Caco-2 (cell line): ENCODE measurements at regions of chr5 and their contacts with region 1.

Region 1: DNA sequence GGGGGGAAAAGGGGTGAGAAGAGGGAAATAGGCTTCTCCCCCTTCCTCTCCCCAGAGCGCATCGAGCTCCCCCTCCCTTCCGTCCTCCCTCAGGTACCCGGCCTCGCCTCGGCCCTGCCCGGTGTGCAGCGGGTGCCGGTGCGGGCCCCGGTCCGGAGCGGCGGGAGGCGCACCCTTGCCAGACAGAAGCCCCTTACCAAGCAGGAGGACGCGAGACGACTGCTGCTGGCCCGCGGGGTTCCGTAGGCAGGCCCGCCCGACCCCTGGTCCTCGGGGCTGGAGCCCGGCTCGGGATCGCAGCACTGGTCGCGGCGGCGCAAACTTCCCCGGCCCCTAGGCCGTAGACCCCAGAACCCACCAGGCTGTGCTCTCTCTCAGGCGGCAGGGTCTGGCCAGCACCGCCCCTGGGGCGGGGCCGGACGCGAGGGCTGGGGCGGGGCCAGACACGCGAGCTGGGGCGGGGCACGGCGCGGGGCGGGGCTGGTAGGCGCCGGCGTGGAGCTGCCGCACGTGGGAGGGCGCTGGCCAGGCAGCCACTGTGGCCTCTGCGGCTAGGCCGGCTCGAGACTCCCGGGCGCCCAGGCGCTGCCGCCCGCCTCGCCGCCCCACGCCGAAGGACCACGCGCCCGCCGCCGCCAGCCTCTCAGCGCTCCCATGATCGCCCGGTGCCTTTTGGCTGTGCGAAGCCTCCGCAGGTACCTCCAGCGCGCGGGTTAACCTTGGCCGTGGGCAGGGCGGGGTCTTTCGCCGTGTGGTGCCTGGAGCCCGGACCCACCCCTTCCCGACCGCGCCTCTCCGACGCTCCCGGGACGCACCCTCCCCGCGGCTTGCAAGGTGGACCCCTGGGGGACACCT is at the starts of genes NLN and SGTB:
- DNase-seq: peak; percentile 82 to 92
- H3K4me3 ChIP-seq: peak within 1 kb of the TSS; percentile 98
- H3K4me3 Mint-ChIP-seq: peak within 1 kb of the TSS; percentile 80
- H3K27ac Mint-ChIP-seq: peak within 1 kb of the TSS; percentile 77
- H3K4me1 ChIP-seq: peaks cover 14% of the 10 kb centered on the region
- H3K4me1 Mint-ChIP-seq: peaks cover 11% of the 10 kb centered on the region
- H3K27me3 ChIP-seq: no peaks in the 10 kb centered on the region
- H3K27me3 Mint-ChIP-seq: no peaks in the 10 kb centered on the region
- CTCF ChIP-seq: no peak
- total RNA-seq, gene NLN: 34.8 and 36.0 TPM in 2 replicates
- total RNA-seq, gene SGTB: 12.0 and 13.0 TPM in 2 replicates

Region 2: GRCh38 chr5:65663804-65664521 is 58.0 kb before region 1 on chr5:
- CTCF ChIA-PET with region 1: no interaction called
- POLR2A ChIA-PET with region 1: no interaction called
- intact Hi-C with region 1: loop called (anchors 5 kb)
- DNase-seq: peak in 1 of 2 experiments; percentile 38
- H3K4me3 ChIP-seq: no peak overlapping the region
- H3K4me3 Mint-ChIP-seq: no peak overlapping the region
- H3K27ac Mint-ChIP-seq: no peak overlapping the region
- H3K4me1 ChIP-seq: no peaks in the 10 kb centered on the region; the same call in 1 of the 2 replicates
- H3K4me1 Mint-ChIP-seq: peaks cover 8% of the 10 kb centered on the region
- H3K27me3 ChIP-seq: no peaks in the 10 kb centered on the region
- H3K27me3 Mint-ChIP-seq: no peaks in the 10 kb centered on the region
- CTCF ChIP-seq: peak; percentile 55 to 60

Region 3: DNA sequence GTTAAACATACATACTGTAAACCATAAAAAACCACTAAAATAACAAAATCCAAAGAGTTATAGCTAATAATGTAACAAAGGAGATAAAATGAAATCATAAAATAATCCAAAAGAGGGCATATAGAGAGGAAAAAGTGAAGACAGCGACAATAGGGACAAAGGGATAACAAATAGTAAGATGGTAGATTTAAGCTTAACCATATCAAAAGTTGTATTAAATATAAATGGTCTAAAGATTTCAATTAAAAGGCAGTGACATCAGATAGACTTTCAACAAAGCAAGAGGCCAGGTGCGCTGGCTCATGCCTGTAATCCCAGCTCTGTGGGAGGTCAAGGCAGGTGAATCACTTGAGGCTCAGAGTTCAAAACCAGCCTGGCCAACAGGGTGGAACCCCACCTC is 367.4 kb after region 1 on chr5:
- CTCF ChIA-PET with region 1: no interaction called
- POLR2A ChIA-PET with region 1: no interaction called
- intact Hi-C with region 1: no loop called
- DNase-seq: no peak
- H3K4me3 ChIP-seq: no peak overlapping the region
- H3K4me3 Mint-ChIP-seq: no peak overlapping the region
- H3K27ac Mint-ChIP-seq: no peak overlapping the region
- H3K4me1 ChIP-seq: no peaks in the 10 kb centered on the region
- H3K4me1 Mint-ChIP-seq: peaks cover 5% of the 10 kb centered on the region
- H3K27me3 ChIP-seq: no peaks in the 10 kb centered on the region
- H3K27me3 Mint-ChIP-seq: no peaks in the 10 kb centered on the region
- CTCF ChIP-seq: no peak

Region 4: GRCh38 chr5:66144074-66144833 is 422.3 kb after region 1 on chr5 and contains the start of gene SREK1:
- CTCF ChIA-PET with region 1: no interaction called
- POLR2A ChIA-PET with region 1: interaction called, 3 read pairs
- intact Hi-C with region 1: loop called (anchors 10 kb)
- DNase-seq: peak; percentile 92 to 95
- H3K4me3 ChIP-seq: peak within 1 kb of the TSS; percentile 67
- H3K4me3 Mint-ChIP-seq: peak within 1 kb of the TSS; percentile 87
- H3K27ac Mint-ChIP-seq: peak within 1 kb of the TSS; percentile 99
- H3K4me1 ChIP-seq: peaks cover 9% of the 10 kb centered on the region; the same call in 1 of the 2 replicates
- H3K4me1 Mint-ChIP-seq: no peaks in the 10 kb centered on the region
- H3K27me3 ChIP-seq: no peaks in the 10 kb centered on the region
- H3K27me3 Mint-ChIP-seq: peaks cover 6% of the 10 kb centered on the region
- CTCF ChIP-seq: no peak
- total RNA-seq, gene SREK1: 81.4 and 95.6 TPM in 2 replicates